Right ventricle myocardium superior (tissue), 1 donor: ENCODE measurements at regions of chr4 and their contacts with region 1.

Region 1: DNA sequence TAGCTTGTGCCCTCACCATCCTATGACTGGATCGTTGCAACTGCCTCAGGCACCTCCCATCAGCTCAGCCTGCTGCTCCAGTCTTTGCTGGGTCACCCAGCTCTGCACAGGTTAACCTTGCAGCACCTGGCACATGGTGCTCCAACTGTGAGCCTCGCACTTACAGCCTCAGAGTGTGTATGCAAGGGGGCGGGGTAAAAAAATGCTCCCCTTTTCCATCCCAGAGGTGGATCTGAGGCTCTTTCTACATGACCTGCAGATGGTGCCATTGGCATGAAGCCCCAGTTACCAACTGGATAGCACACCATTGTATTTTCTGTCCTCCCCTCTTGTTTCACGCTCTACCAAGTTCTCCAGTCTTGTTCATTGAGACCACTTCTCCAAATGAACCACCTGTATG is 46.1 kb upstream of the TRPC3 start:
- DNase-seq: no peak
- ATAC-seq: peak; percentile 57

Region 2: GRCh38 chr4:121696581-121697461 is 301.2 kb before region 1 on chr4 and contains the start of gene ANXA5:
- intact Hi-C with region 1: no loop called
- DNase-seq: peak; percentile 94
- ATAC-seq: peak; percentile 97
- total RNA-seq, gene ANXA5: 105 TPM

Region 3: GRCh38 chr4:122139139-122139538 is 141.1 kb after region 1 on chr4:
- intact Hi-C with region 1: no loop called
- DNase-seq: no peak
- ATAC-seq: no peak

Region 4: DNA sequence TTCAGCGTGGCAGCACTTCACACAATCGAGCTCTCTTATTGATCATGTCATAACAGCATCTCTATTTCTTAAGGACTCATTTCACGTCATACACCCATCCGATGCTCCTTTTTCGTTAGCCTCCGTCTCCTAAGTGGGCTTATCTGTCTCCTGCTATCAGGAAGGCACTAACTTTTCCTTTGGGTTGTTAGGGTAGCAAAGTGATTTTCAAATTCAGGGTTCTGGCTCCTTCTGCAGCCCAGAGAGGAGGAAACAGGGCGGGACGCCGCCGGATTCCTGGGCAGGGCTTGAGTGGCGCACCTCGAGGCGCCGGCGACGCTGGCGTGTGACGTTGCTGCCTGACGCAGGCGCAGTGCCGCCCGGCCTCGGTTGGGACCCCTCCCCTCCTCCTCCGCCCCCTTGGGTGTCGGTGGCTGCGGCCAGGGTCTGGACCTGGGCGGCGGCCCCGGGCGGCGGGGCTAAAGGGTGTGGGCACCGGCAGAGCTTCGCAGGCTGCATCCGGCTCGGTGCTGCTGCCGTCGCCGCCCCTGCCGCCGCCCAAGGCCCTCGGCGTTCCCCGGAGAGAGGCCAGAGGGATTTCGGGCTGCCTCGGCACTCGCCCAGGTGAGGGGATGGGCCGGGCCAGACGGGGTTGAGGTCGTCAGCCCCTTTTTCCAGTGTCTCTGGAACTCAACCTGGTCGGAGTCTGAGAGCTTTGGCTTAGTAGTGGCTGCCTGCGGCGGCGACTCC is 154.1 kb after region 1 on chr4 and contains the start of gene BLTP1:
- intact Hi-C with region 1: loop called (anchors 10 kb)
- DNase-seq: peak; percentile 95
- ATAC-seq: peak; percentile 100
- total RNA-seq, gene BLTP1: 30.5 TPM

Region 5: GRCh38 chr4:122224348-122224747 is 226.3 kb after region 1 on chr4:
- intact Hi-C with region 1: loop called (anchors 5 kb)
- DNase-seq: no peak
- ATAC-seq: no peak